Activated CD8-positive, alpha-beta memory T cell treated with anti-CD3 and anti-CD28 coated beads, Interleukin-2, amount 10 ng/mL, durations not matched to agents 7 days and 5 days (primary cell): ENCODE measurements at regions of chr16 and their contacts with region 1.

Region 1: GRCh38 chr16:648781-649589 is at the start of gene WDR90:
- DNase-seq: peak; percentile 96
- ATAC-seq: peak; percentile 88
- H3K4me3 Mint-ChIP-seq: peak within 1 kb of the TSS; percentile 75
- H3K27ac Mint-ChIP-seq: peak within 1 kb of the TSS; percentile 78
- H3K4me1 Mint-ChIP-seq: peaks cover 17% of the 10 kb centered on the region
- H3K27me3 Mint-ChIP-seq: no peaks in the 10 kb centered on the region
- total RNA-seq, gene WDR90: 74.7 to 108 TPM

Region 2: DNA sequence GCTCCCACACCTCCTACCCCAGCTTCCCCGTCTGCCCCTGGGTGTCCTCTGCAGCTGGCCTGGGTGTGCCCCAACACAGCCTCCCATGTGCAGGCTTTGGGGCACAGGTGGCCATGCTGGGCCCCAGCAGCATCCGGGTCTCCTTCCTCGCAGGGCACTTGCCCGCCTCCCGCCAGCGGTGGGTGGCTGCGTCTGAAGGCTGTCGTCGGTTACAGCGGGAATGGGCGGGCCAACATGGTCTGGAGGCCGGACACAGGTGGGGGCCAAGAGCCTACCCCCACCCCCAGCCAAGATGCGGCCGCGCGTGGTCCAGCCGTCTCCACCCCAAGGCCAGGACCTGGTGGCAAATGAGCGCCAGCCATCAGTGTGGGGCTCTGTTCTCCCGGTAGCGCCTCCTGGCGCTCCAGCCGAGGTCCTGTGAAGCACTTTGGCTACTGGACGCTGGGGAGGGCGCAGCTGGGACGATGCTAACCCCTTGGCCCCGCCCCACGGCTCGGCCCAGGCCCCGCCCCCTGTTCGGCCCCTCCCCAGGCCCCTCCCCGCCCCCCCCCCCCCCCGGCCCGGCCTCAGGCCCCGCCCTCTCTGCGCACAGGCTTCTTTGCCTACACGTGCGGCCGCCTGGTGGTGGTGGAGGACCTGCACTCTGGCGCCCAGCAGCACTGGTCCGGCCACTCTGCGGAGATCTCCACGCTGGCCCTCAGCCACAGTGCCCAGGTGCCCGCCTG is 11.6 kb after region 1 on chr16:
- CTCF ChIA-PET with region 1: interaction called, 11 read pairs
- DNase-seq: peak; percentile 67
- ATAC-seq: peak; percentile 73
- H3K4me3 Mint-ChIP-seq: no peak overlapping the region
- H3K27ac Mint-ChIP-seq: no peak overlapping the region
- H3K4me1 Mint-ChIP-seq: peaks cover 2% of the 10 kb centered on the region
- H3K27me3 Mint-ChIP-seq: no peaks in the 10 kb centered on the region

Region 3: DNA sequence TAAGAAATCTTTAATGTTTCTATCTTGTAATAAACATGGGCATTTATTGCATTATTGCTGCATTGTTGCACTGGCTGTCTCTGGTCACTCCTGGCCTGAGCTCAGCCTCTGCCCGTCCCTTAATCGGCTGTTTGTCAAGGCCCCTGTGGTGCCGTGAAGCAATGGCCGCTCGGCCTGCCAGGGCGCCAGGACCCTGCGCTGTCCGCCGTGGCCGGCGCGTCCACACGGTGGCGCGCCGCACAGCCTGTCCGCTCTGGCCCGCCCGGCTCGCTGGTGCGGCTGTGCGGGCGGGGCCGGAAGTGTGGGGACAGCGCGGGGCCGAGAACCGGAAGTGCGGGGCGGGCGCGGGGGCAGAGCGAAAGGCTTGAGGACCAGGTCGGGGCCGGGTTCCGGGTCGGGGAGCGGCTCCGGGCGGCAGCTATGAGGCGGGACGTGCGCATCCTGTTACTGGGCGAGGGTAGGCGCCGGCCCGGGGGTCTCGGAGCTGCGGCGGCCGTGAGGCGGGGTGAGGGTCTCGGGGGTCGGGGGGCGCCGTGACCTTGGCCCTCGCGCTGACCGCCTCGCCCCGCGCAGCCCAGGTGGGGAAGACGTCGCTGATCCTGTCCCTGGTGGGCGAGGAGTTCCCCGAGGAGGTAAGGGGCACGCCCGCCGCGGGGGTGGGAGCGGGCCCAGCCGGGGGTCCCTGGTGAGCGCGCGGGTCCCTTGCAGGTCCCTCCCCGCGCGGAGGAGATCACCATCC is 19.0 kb after region 1 on chr16 and contains the start of gene RHOT2:
- CTCF ChIA-PET with region 1: interaction called, 13 read pairs
- DNase-seq: peak; percentile 94
- ATAC-seq: peak; percentile 90
- H3K4me3 Mint-ChIP-seq: peak within 1 kb of the TSS; percentile 73
- H3K27ac Mint-ChIP-seq: peak within 1 kb of the TSS; percentile 81
- H3K4me1 Mint-ChIP-seq: peaks cover 10% of the 10 kb centered on the region
- H3K27me3 Mint-ChIP-seq: no peaks in the 10 kb centered on the region
- total RNA-seq, gene RHOT2: 134 to 168 TPM